Right lobe of liver (tissue), 6 donors: ENCODE measurements at regions of chr11 and their contacts with region 1.

Region 1: GRCh38 chr11:11036848-11037732 is 179.2 kb upstream of the ZBED5 start:
- DNase-seq: peak in 1 of 3 donors; percentile 51
- ATAC-seq: peak; percentile 85 to 94 (median 88)
- H3K4me3 ChIP-seq: no peak overlapping the region
- H3K27ac ChIP-seq: no peak overlapping the region
- H3K4me1 ChIP-seq: no peaks in the 10 kb centered on the region
- H3K27me3 ChIP-seq: no peaks in the 10 kb centered on the region
- CTCF ChIP-seq: peak; percentile 71 to 81 (median 79)
- POLR2A ChIP-seq: no peak

Region 2: DNA sequence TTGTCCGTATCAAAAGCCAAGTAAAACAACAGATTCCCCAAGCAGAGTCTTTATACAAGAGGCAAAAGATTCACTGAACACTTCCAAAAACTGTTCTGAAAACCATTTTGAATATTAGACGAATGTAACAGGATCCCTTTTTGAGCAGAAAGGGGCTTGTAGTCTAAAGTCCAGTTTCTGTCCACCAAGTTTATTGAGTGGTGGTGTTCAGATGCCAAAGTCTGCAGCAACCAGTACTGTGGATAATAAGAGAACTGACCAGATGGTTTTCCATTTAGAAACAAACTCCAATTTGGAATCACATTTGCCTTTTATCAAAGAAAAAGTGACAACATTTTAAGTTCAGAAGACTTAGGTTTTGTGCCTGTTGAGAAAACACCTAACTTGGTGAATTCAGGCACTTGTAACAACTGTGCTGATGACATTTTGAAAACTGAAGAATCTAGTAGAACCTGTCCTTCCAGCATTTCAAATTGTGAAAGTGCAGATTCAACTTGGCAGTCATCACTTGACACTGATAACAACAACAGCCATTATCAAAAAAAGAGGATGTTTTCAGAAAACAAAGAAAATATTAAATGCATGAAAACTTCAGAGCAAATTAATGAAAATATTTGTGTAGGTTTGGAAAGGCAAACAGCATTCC is 98.9 kb after region 1 on chr11:
- intact Hi-C with region 1: no loop called
- DNase-seq: no peak
- ATAC-seq: peak in 3 of 4 donors; percentile 57 to 68 (median 60)
- H3K4me3 ChIP-seq: no peak overlapping the region
- H3K27ac ChIP-seq: no peak overlapping the region
- H3K4me1 ChIP-seq: peaks cover 0 to 16% (median 0%) of the 10 kb centered on the region in 4 donors
- H3K27me3 ChIP-seq: no peaks in the 10 kb centered on the region
- CTCF ChIP-seq: no peak
- POLR2A ChIP-seq: no peak

Region 3: DNA sequence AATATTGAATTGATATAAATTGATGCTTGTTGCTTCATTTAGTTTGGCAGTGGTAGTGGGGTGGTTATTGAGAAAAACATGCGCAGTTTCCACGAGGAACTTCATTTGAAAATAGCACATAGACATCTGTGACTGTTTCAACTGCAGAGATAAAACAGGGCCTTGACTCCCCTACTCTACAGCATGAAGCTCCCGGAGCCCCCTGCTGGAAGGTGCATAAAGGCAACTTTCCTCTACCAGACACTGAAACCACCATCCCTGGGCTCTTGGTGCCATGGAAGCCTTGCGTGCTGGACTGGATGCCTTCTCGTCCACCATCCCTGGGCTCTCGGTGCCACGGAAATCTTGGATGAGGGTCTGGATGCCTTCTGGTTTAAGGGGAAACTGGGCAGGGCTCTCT is 120.1 kb after region 1 on chr11:
- intact Hi-C with region 1: loop called in 1 of 2 experiments (anchors 10 kb)
- DNase-seq: peak in 2 of 3 donors; percentile 52 to 60
- ATAC-seq: peak; percentile 53 to 86 (median 72)
- H3K4me3 ChIP-seq: no peak overlapping the region
- H3K27ac ChIP-seq: no peak overlapping the region
- H3K4me1 ChIP-seq: no peaks in the 10 kb centered on the region
- H3K27me3 ChIP-seq: no peaks in the 10 kb centered on the region
- CTCF ChIP-seq: peak; percentile 24 to 71 (median 47)
- POLR2A ChIP-seq: no peak

Region 4: GRCh38 chr11:11787305-11788062 is 750.4 kb after region 1 on chr11:
- intact Hi-C with region 1: loop called (anchors 5 to 10 kb)
- DNase-seq: peak; percentile 65 to 73 (median 68)
- ATAC-seq: peak; percentile 92 to 96 (median 94)
- H3K4me3 ChIP-seq: no peak overlapping the region
- H3K27ac ChIP-seq: no peak overlapping the region
- H3K4me1 ChIP-seq: no peaks in the 10 kb centered on the region
- H3K27me3 ChIP-seq: no peaks in the 10 kb centered on the region
- CTCF ChIP-seq: peak; percentile 88 to 91 (median 89)
- POLR2A ChIP-seq: no peak